Activated CD8-positive, alpha-beta memory T cell treated with anti-CD3 and anti-CD28 coated beads, Interleukin-2, amount 10 ng/mL, durations not matched to agents 7 days and 5 days (primary cell): ENCODE measurements at regions of chr18 and their contacts with region 1.

Region 1: GRCh38 chr18:63339920-63340484 is 20.4 kb upstream of the BCL2 start:
- DNase-seq: peak; percentile 51
- ATAC-seq: peak; percentile 39
- H3K4me3 Mint-ChIP-seq: no peak overlapping the region
- H3K27ac Mint-ChIP-seq: peak overlapping the region; percentile 47
- H3K4me1 Mint-ChIP-seq: peaks cover 6% of the 10 kb centered on the region
- H3K27me3 Mint-ChIP-seq: no peaks in the 10 kb centered on the region

Region 2: GRCh38 chr18:63325086-63325686 is 14.8 kb before region 1 on chr18:
- CTCF ChIA-PET with region 1: interaction called, 15 read pairs
- DNase-seq: no peak
- ATAC-seq: no peak
- H3K4me3 Mint-ChIP-seq: no peak overlapping the region
- H3K27ac Mint-ChIP-seq: no peak overlapping the region
- H3K4me1 Mint-ChIP-seq: peaks cover 18% of the 10 kb centered on the region
- H3K27me3 Mint-ChIP-seq: no peaks in the 10 kb centered on the region

Region 3: GRCh38 chr18:63356272-63356896 is 16.4 kb after region 1 on chr18:
- CTCF ChIA-PET with region 1: interaction called, 16 read pairs
- DNase-seq: no peak
- ATAC-seq: no peak
- H3K4me3 Mint-ChIP-seq: no peak overlapping the region
- H3K27ac Mint-ChIP-seq: no peak overlapping the region
- H3K4me1 Mint-ChIP-seq: peaks cover 4% of the 10 kb centered on the region
- H3K27me3 Mint-ChIP-seq: no peaks in the 10 kb centered on the region

Region 4: DNA sequence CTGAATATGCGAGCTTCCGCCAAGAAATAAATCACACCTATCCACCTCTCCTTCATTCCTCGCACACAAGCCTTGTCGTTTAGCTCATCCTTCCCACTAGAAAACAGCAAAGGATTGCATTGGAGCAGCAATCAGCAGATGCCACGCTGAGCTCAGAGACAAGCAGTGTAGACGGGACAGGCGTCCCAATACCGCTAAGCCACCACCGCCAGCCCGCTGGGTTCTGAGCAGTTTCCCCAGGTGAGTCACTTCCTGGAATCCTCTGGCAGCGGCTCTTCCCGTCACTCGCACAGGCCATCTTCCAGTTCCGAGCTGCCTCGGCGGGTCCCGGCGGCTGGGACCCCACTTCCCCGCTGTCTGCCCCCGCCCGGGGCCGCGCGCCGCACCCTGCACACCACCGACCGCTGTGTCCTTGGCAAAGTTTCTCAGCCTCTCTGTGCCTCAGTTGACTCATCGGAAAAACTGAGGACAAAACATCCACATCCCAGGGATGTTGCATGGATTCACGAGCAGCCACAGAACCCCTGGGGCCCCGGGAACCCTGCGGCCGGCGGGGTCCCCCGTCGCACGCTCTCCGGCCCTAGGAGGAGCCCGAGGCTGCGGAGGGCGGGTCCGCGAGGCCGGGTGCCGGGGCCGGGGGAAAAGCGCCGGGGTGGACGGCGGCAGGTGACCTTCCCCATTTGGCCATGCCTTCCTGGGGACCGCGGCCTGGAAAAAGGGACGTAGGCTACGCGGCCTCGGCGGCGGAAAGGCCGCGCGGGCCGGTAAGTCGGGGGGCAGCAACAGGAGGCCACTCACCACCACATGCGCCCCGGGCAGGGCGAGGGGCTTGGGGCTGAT is 26.4 kb after region 1 on chr18:
- CTCF ChIA-PET with region 1: interaction called, 20 read pairs
- DNase-seq: peak; percentile 86
- ATAC-seq: peak; percentile 60
- H3K4me3 Mint-ChIP-seq: peak overlapping the region; percentile 85
- H3K27ac Mint-ChIP-seq: peak overlapping the region; percentile 77
- H3K4me1 Mint-ChIP-seq: peaks cover 39% of the 10 kb centered on the region
- H3K27me3 Mint-ChIP-seq: no peaks in the 10 kb centered on the region

Region 5: GRCh38 chr18:63523660-63524059 is 183.7 kb after region 1 on chr18:
- CTCF ChIA-PET with region 1: no interaction called
- DNase-seq: no peak
- ATAC-seq: no peak
- H3K4me3 Mint-ChIP-seq: no peak overlapping the region
- H3K27ac Mint-ChIP-seq: no peak overlapping the region
- H3K4me1 Mint-ChIP-seq: no peaks in the 10 kb centered on the region
- H3K27me3 Mint-ChIP-seq: peaks cover 45% of the 10 kb centered on the region